ENCODE measurements at regions of chr17 and their contacts with region 1.

Region 1: GRCh38 chr17:39461113-39461925 is at the start of gene CDK12:
- DNase-seq: peak; percentile 93 to 98
- H3K4me3 ChIP-seq: peak within 1 kb of the TSS; percentile 68 to 81
- H3K27ac ChIP-seq: peak within 1 kb of the TSS; percentile 96
- H3K4me1 ChIP-seq: peaks cover 7 to 26% of the 10 kb centered on the region in 2 donors
- H3K27me3 ChIP-seq: no peaks in the 10 kb centered on the region
- CTCF ChIP-seq: no peak
- total RNA-seq, gene CDK12: 25.2 TPM

Region 2: DNA sequence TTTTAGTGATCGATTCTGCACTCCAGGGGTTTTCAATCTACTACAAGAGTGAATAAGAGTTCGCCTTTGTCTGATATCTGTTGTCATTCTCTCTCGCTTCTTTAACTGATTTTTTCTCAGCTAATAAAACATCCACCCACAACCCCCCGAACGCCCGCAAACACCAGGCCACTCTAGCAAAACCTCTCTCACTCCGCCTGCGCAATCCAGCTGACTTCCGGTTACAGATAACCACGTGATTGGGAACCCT is 261.6 kb before region 1 on chr17:
- intact Hi-C with region 1: loop called (anchors 5 kb)
- DNase-seq: peak; percentile 56 to 96
- H3K4me3 ChIP-seq: peak overlapping the region; percentile 83 to 89
- H3K27ac ChIP-seq: peak overlapping the region; percentile 92 to 98
- H3K4me1 ChIP-seq: peaks cover 28 to 46% of the 10 kb centered on the region in 2 donors
- H3K27me3 ChIP-seq: no peaks in the 10 kb centered on the region
- CTCF ChIP-seq: no peak

Region 3: GRCh38 chr17:39352511-39352910 is 108.8 kb before region 1 on chr17:
- intact Hi-C with region 1: no loop called
- DNase-seq: no peak
- H3K4me3 ChIP-seq: no peak overlapping the region
- H3K27ac ChIP-seq: no peak overlapping the region
- H3K4me1 ChIP-seq: peaks cover 0 to 3% of the 10 kb centered on the region in 2 donors
- H3K27me3 ChIP-seq: no peaks in the 10 kb centered on the region
- CTCF ChIP-seq: peak in 1 of 3 experiments; percentile 35

Region 4: DNA sequence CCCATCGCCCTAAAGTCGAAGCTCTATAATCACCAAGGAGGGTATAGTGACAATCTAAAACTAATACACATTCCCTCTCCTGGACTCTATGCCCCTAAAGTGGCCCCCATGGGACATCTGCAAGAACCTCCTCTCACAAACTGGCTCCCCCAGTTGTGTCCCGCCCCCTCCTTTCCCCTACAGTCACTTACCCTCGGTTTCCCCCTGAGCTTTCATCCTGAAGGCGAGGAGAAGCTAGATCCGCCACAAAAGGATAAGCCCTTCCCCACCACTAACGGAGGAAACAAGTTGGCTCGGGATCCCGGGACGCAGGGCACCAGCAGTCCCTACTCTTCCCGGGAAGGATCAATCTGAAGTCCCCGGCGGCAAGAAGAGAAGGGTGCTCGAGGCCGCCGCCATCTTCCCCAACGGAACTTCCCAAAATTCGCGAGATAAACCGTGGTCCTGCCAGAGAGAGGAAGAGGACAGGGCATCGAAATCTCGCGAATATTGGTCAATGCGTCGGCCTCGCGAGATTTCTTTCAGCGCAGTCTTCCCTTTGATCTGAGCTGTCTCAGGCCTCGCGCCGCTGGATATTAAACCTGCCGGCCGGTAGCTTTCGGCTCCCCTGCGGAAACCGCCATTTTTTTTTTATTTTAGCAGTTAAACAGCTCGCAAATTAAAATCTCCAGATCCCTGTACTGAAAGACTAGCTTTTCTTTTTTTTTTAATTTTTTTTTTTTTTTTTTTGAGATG is 10.3 kb before region 1 on chr17 and contains the start of gene MED1:
- intact Hi-C with region 1: loop called (anchors 1 kb)
- DNase-seq: peak; percentile 84 to 97
- H3K4me3 ChIP-seq: peak within 1 kb of the TSS; percentile 51 to 93
- H3K27ac ChIP-seq: peak within 1 kb of the TSS; percentile 57 to 83
- H3K4me1 ChIP-seq: peaks cover 0 to 2% of the 10 kb centered on the region in 2 donors
- H3K27me3 ChIP-seq: no peaks in the 10 kb centered on the region
- CTCF ChIP-seq: no peak
- total RNA-seq, gene MED1: 11.8 TPM